OCI-LY7 (cell line): ENCODE measurements at regions of chr6 and their contacts with region 1.

Region 1: GRCh38 chr6:37860226-37860839 is 40.8 kb downstream of the ZFAND3 start:
- DNase-seq: peak; percentile 35
- H3K4me3 ChIP-seq: no peak overlapping the region
- H3K27ac ChIP-seq: no peak overlapping the region
- H3K4me1 ChIP-seq: no peaks in the 10 kb centered on the region
- CTCF ChIP-seq: peak; percentile 84

Region 2: DNA sequence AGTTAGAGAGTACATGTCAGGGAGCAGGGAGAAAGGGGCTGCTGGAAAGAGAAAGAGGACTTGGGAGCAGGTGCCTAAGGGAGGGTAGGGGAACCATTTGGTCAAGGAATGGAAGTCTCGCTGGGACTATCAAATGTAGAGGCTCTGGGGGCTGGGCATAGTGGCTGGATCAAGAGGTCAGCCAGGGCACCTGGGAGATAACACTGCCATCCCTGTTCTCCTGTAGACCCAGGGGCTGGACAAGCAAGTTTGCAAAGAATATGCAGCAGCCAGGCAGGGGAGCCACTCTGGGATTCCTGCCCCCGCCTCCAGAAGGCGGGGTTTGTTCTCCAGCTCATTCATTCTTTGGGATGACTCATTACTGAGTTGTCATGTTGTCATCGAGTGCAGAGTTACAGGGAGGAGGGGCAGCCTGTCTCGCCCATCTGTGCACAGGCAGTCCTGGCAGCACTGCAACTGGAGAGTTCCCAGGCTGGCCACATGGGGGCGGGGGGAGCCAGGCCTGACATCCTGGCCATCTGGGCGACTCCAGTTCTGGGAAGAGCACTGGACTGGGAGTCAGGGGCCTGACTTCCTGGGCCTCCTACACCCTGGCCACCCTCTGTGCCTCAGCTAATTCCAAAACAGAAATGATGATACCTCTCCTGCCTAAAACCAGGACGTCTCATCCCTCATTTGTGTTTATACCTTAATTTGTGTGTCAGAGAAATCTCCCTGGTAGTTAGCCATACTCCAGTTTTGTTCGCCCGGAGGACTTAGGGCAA is 69.0 kb before region 1 on chr6:
- CTCF ChIA-PET with region 1: no interaction called
- POLR2A ChIA-PET with region 1: interaction called, 5 read pairs
- intact Hi-C with region 1: loop called (anchors 2 kb)
- DNase-seq: peak; percentile 57
- H3K4me3 ChIP-seq: no peak overlapping the region
- H3K27ac ChIP-seq: no peak overlapping the region
- H3K4me1 ChIP-seq: no peaks in the 10 kb centered on the region
- CTCF ChIP-seq: peak; percentile 87